ENCODE measurements at regions of chr2 and their contacts with region 1.

Region 1: DNA sequence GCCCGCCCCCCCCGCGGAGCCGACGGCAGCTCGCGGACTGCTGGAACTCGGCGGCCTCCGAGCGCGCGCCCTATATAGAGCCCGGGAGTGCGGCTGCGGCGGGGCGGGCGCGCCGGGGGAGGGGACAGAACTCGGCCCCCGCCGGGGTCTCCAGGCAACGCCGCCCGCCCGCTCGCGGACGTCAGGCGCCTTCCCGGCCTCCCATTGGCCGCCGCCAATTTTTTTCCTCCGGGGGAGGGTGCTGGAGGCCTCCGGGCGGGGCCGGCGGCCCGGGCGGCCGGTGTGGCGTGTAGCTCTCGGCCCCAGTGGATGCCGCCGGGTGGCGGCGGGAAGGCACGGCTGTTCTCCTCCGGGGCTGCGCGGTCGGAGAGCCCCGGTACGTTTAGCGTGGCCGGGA is at the start of gene ZFP36L2:
- DNase-seq: peak; percentile 78 to 96
- H3K4me3 ChIP-seq: peak within 1 kb of the TSS; percentile 81 to 89
- H3K27ac ChIP-seq: peak within 1 kb of the TSS; percentile 98
- H3K4me1 ChIP-seq: peaks cover 6 to 17% of the 10 kb centered on the region in 2 donors
- H3K27me3 ChIP-seq: no peaks in the 10 kb centered on the region
- CTCF ChIP-seq: peak in 1 of 3 experiments; percentile 19
- total RNA-seq, gene ZFP36L2: 148 TPM

Region 2: GRCh38 chr2:42828487-42829425 is 397.8 kb before region 1 on chr2:
- intact Hi-C with region 1: loop called (anchors 2 kb)
- DNase-seq: peak in 1 of 2 donors; percentile 83
- H3K4me3 ChIP-seq: no peak overlapping the region
- H3K27ac ChIP-seq: peak overlapping the region; percentile 11 to 56
- H3K4me1 ChIP-seq: peaks cover 0 to 17% of the 10 kb centered on the region in 2 donors
- H3K27me3 ChIP-seq: no peaks in the 10 kb centered on the region
- CTCF ChIP-seq: peak; percentile 87 to 94 (median 91)

Region 3: GRCh38 chr2:42974721-42975717 is 251.5 kb before region 1 on chr2:
- intact Hi-C with region 1: loop called (anchors 2 kb)
- DNase-seq: peak in 1 of 2 donors; percentile 87
- H3K4me3 ChIP-seq: peak overlapping the region; percentile 23 to 66
- H3K27ac ChIP-seq: peak overlapping the region; percentile 28 to 66
- H3K4me1 ChIP-seq: peaks cover 7 to 12% of the 10 kb centered on the region in 2 donors
- H3K27me3 ChIP-seq: no peaks in the 10 kb centered on the region
- CTCF ChIP-seq: peak; percentile 93 to 98 (median 97)

Region 4: GRCh38 chr2:43075054-43075593 is 151.4 kb before region 1 on chr2:
- intact Hi-C with region 1: loop called (anchors 1 kb)
- DNase-seq: peak; percentile 71 to 95
- H3K4me3 ChIP-seq: no peak overlapping the region
- H3K27ac ChIP-seq: peak overlapping the region; percentile 90 to 99
- H3K4me1 ChIP-seq: peaks cover 28 to 63% of the 10 kb centered on the region in 2 donors
- H3K27me3 ChIP-seq: no peaks in the 10 kb centered on the region
- CTCF ChIP-seq: peak in 2 of 3 experiments; percentile 12 to 25

Region 5: DNA sequence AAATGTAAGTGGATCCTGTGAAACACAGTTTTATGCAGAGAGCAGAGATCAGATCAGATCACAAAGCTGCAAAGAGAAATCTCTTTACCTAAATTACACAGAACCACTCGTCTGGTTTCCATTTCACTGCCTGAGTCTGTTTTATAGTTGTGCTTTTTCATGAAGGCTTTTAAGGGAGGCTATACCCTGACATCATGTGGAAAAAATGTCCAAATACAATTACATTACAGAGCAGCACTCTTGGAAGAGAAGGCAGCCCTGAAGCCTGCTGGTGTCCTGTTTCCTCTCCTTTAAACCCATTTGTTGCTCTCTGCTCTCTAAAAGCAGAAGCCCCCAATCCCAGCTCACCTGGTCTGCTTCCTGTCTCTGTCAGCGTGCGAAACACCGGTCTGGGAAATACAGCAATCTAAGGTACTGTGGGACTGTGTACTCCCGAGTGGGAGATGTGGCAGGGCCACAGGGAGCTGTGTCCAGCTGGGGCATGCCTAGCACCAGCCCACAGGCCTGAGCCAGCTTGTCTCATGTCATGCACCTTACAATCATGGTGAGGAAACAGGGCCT is 24.7 kb after region 1 on chr2:
- intact Hi-C with region 1: loop called (anchors 1 kb)
- DNase-seq: no peak
- H3K4me3 ChIP-seq: no peak overlapping the region
- H3K27ac ChIP-seq: peak overlapping the region; percentile 89 to 92
- H3K4me1 ChIP-seq: peaks cover 4 to 19% of the 10 kb centered on the region in 2 donors
- H3K27me3 ChIP-seq: no peaks in the 10 kb centered on the region
- CTCF ChIP-seq: peak in 1 of 3 experiments; percentile 1

Region 6: DNA sequence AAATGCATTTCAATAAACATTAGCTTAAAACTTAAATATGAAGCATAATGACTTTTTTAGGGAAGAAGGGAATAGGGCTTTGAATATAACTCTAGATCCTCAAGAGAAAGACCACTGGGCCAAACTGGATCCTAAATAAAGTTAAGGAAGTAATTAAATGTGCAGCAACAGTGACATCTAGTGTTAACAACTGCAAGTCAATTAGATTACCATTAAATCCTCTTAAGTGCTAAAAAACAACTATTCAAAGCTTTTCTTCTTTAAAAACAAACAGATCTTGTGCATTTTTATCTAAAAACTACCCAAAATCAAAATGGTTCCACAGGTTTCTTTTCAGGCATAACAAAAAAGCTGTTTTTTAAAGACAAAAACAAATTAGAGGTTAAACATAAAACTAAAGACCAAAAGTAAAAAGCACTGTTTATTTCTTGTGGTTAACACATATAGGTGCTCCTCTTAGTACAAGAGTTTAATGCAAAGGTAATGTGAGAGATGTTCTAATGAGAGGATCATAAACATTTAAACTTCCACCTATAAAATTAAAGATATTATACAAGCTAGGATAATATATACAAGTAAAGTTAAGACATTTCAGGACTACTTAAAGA is 257.9 kb after region 1 on chr2:
- intact Hi-C with region 1: loop called (anchors 1 kb)
- DNase-seq: no peak
- H3K4me3 ChIP-seq: no peak overlapping the region
- H3K27ac ChIP-seq: peak overlapping the region in 1 of 2 donors; percentile 78
- H3K4me1 ChIP-seq: peaks cover 0 to 34% of the 10 kb centered on the region in 2 donors
- H3K27me3 ChIP-seq: no peaks in the 10 kb centered on the region
- CTCF ChIP-seq: peak; percentile 46 to 74 (median 71)

Region 7: GRCh38 chr2:43958397-43959275 is 732.1 kb after region 1 on chr2:
- intact Hi-C with region 1: no loop called
- DNase-seq: no peak
- H3K4me3 ChIP-seq: no peak overlapping the region
- H3K27ac ChIP-seq: no peak overlapping the region
- H3K4me1 ChIP-seq: no peaks in the 10 kb centered on the region
- H3K27me3 ChIP-seq: no peaks in the 10 kb centered on the region
- CTCF ChIP-seq: no peak

Measured in ascending aorta (tissue), 2 donors.